H1 (cell line): ENCODE measurements at regions of chr12 and their contacts with region 1.

Region 1: GRCh38 chr12:21657326-21658077 is at the start of gene LDHB:
- DNase-seq: peak; percentile 89 to 94
- H3K4me3 ChIP-seq: peak within 1 kb of the TSS; percentile 95 to 99 (median 96)
- H3K27ac ChIP-seq: peak within 1 kb of the TSS; percentile 99
- H3K4me1 ChIP-seq: peaks cover 0 to 10% (median 3%) of the 10 kb centered on the region in 4 experiments; a peak in 4 of 7 replicates
- H3K27me3 ChIP-seq: no peaks in the 10 kb centered on the region
- CTCF ChIP-seq: no peak
- EP300 ChIP-seq: no peak
- POLR2A ChIP-seq: peak; percentile 85 to 99
- RAD21 ChIP-seq: no peak
- total RNA-seq, gene LDHB: 1,716 and 1,781 TPM in 2 replicates

Region 2: DNA sequence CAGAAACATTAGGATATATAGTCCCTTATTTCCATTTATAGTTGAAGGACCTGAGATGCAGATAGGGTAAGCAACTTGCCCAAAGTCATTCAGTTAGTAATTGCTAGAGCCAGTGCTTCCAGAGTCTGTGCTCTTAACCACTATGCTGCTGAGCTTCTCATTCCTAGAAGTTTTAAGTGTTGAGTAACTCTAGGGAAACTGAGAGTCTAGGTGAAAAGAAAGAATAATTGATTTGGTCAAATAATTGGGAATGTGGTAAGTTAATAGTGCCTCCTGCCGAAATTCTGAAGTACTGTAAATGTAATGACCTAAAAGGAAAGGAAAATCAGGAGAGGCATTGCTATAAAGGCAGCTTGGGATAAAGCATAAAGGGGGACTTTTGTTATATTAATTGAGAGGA is 206.0 kb before region 1 on chr12:
- CTCF ChIA-PET with region 1: no interaction called
- POLR2A ChIA-PET with region 1: no interaction called
- DNase-seq: no peak
- H3K4me3 ChIP-seq: no peak overlapping the region
- H3K27ac ChIP-seq: no peak overlapping the region
- H3K4me1 ChIP-seq: no peaks in the 10 kb centered on the region
- H3K27me3 ChIP-seq: no peaks in the 10 kb centered on the region
- CTCF ChIP-seq: peak in 2 of 3 experiments; percentile 35 to 45; a peak in 2 of 4 replicates
- EP300 ChIP-seq: no peak
- POLR2A ChIP-seq: no peak
- RAD21 ChIP-seq: peak; percentile 66 to 68

Region 3: DNA sequence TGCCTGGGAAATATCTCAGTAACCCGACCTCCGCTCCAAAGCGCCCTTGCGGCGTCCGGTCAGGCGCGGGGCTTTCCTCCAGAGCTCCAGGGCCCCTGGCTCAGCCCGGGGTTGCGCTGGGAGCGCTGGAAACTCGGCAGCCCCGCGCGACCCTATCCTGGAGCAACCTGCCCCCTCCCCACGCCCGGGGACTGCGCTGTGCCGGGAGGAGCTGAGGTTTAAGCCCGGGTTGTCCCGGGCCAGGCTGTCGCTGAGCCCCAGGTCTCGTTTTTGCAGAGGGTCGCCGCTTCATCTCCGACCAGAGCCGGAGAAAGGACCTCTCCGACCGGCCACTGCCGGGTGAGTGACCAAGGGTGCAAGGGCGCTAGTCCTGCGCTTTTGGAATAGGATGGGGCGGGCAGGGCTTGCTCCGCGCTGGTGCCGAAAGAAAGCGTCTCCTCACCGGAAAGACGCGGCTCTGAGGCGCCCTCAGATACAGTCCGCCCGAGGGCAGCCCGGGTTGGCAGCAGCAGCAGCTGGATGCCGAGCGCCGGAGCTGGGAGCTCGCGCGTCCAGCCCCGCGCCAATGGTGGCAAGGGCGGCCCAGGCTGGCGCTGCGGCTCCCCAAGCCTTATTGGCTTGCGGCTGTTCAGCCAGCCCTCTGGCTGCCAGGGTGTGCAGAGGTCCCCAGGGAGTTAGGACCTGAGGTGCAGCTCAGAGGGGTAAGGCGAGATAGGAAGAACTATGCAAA is 129.9 kb before region 1 on chr12:
- CTCF ChIA-PET with region 1: no interaction called
- POLR2A ChIA-PET with region 1: interaction called, 14 read pairs
- DNase-seq: peak; percentile 54 to 78
- H3K4me3 ChIP-seq: peak overlapping the region; percentile 51 to 75 (median 62)
- H3K27ac ChIP-seq: no peak overlapping the region
- H3K4me1 ChIP-seq: peaks cover 0 to 4% (median 0%) of the 10 kb centered on the region in 4 experiments; a peak in 1 of 7 replicates
- H3K27me3 ChIP-seq: peaks cover 0 to 16% (median 9%) of the 10 kb centered on the region in 4 experiments; a peak in 5 of 7 replicates
- CTCF ChIP-seq: no peak
- EP300 ChIP-seq: no peak
- POLR2A ChIP-seq: peak in 1 of 2 experiments; percentile 65; a peak in 2 of 3 replicates
- RAD21 ChIP-seq: 0 out of 4 replicates have a peak, but pooled peaks of 1 of the 2 experiments have one; percentile 1

Region 4: DNA sequence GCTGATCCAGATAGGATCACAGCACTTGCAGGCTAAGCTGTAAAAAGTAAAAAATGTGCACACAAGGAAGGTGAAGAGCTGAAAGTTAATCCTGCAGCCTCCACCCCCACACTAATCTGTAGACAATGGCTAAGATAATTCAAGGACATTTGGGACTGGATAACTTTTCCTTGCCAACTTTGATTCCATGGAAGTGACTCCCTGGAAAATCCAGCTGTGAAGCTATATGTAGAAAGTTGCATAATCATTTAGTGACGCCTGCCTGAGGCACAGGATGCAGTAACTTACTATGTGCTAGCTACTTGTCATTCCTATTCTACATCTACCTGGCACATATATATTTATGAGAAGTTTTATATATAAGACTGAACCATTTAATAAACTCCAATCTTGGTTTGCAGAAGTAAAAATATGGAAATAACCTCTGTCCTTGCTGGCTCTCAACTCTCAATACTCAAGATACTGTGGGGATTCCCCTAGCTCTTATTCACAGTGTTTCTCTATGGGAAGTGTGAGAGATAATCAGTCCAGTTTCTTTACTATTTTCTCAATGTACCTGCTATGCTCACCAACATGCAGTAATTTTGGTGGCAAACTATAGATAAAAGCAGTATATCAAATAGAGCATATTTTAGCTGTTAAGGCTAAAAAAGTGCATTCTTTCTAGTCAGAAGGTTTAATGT is 14.7 kb before region 1 on chr12:
- CTCF ChIA-PET with region 1: interaction called, 4 read pairs
- POLR2A ChIA-PET with region 1: interaction called, 123 read pairs
- DNase-seq: no peak
- H3K4me3 ChIP-seq: no peak overlapping the region
- H3K27ac ChIP-seq: no peak overlapping the region
- H3K4me1 ChIP-seq: peaks cover 0 to 4% (median 2%) of the 10 kb centered on the region in 4 experiments; a peak in 1 of 7 replicates
- H3K27me3 ChIP-seq: no peaks in the 10 kb centered on the region
- CTCF ChIP-seq: no peak
- EP300 ChIP-seq: no peak
- POLR2A ChIP-seq: no peak
- RAD21 ChIP-seq: no peak

Region 5: GRCh38 chr12:21677622-21678277 is 20.2 kb after region 1 on chr12:
- CTCF ChIA-PET with region 1: interaction called, 11 read pairs
- POLR2A ChIA-PET with region 1: interaction called, 19 read pairs
- DNase-seq: no peak
- H3K4me3 ChIP-seq: no peak overlapping the region
- H3K27ac ChIP-seq: no peak overlapping the region
- H3K4me1 ChIP-seq: no peaks in the 10 kb centered on the region
- H3K27me3 ChIP-seq: no peaks in the 10 kb centered on the region
- CTCF ChIP-seq: no peak
- EP300 ChIP-seq: no peak
- POLR2A ChIP-seq: no peak
- RAD21 ChIP-seq: no peak

Region 6: GRCh38 chr12:22046090-22046967 is 388.8 kb after region 1 on chr12 and contains the start of gene CMAS:
- CTCF ChIA-PET with region 1: no interaction called
- POLR2A ChIA-PET with region 1: interaction called, 14 read pairs
- DNase-seq: peak; percentile 38 to 90
- H3K4me3 ChIP-seq: peak within 1 kb of the TSS; percentile 74 to 90 (median 84)
- H3K27ac ChIP-seq: peak within 1 kb of the TSS; percentile 83
- H3K4me1 ChIP-seq: peaks cover 0 to 14% (median 6%) of the 10 kb centered on the region in 4 experiments; a peak in 4 of 7 replicates
- H3K27me3 ChIP-seq: no peaks in the 10 kb centered on the region
- CTCF ChIP-seq: no peak
- EP300 ChIP-seq: no peak
- POLR2A ChIP-seq: peak; percentile 78 to 86
- RAD21 ChIP-seq: no peak
- total RNA-seq, gene CMAS: 53.2 and 59.8 TPM in 2 replicates